Mammary epithelial cell (primary cell): ENCODE measurements at regions of chr17 and their contacts with region 1.

Region 1: DNA sequence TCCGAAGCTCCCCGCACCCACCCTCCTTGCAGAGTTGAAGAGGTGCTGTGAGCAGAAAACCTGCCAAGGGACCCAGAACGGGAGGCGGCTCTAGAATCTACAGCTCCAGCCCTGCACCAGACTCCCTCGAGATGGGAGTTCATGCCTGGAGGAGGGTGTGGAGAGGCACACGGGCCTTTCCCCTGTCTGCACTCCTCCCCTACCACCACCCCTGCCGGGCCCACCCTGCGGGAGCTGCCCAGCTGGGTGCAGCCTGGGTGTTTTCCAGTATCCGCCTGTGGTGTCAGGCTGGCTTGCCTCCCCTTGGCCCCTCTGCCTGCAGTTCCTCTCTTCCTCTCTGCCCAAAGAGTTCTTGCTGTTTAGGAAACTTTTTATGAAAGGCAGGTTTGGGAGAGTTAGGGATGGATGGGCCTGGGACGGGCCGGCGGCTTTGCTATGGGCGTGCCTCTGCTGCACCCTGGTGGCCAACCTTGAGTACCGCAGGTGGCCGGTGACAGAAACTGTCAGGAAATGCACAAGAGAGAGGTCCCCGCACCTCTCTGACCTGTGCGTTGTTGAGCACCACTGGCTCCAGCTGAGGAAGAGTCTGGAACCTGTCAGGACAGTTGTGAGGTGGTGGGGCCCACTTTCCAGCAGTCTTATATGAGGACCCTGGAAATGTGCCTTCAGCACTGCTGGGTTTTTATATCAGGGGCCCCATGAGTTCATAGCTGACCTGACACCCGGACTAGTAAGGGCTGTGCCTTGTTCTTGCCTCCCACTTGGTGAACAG is 354.1 kb downstream of the SEC14L1 start:
- DNase-seq: peak; percentile 46
- H3K4me3 ChIP-seq: no peak overlapping the region
- H3K27ac ChIP-seq: no peak overlapping the region
- H3K4me1 ChIP-seq: no peaks in the 10 kb centered on the region
- H3K27me3 ChIP-seq: no peaks in the 10 kb centered on the region
- CTCF ChIP-seq: peak; percentile 68 to 95

Region 2: DNA sequence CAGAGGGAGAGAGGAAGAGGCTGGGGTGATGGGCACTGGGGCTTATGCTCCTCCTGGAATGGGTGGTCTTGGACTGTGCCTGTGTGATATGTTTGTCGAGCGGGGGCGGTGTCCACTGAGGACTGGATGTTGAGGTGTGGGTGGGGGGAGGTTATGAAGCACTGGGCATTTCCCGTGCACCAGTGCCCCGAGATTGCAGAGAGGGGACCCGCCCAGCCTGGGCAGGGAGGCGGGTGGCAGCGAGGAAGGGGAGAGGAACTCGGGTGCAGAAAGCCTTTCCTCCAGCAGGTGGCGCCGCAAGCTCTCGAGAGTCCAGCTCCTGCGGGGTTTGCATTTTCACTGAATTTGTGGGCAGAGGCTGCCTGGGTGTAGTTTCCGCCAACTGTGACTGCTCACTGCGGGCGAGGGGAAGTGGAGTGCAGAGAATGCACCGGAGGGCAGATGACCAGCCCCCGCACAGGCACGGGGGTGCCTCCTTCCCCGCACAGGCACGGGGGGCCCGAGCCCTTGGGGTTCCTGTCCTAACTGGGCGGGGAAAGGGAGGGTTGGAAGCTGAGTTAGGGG is 163.5 kb before region 1 on chr17:
- CTCF ChIA-PET with region 1: no interaction called
- dilution Hi-C with region 1: no loop called
- in situ Hi-C with region 1: loop called in 1 of 2 experiments (anchors 10 kb)
- intact Hi-C with region 1: loop called (anchors 1 kb)
- DNase-seq: peak; percentile 74
- H3K4me3 ChIP-seq: no peak overlapping the region
- H3K27ac ChIP-seq: peak overlapping the region; percentile 36
- H3K4me1 ChIP-seq: peaks cover 50% of the 10 kb centered on the region
- H3K27me3 ChIP-seq: no peaks in the 10 kb centered on the region
- CTCF ChIP-seq: peak; percentile 72 to 95